CD8-positive, alpha-beta T cell (primary cell): ENCODE measurements at regions of chr7 and their contacts with region 1.

Region 1: GRCh38 chr7:134458806-134459698 is at the start of gene AKR1B1:
- DNase-seq: peak; percentile 75 to 93 (median 87)
- ATAC-seq: peak; percentile 88
- H3K4me3 ChIP-seq: peak within 1 kb of the TSS; percentile 75 to 85
- H3K4me3 Mint-ChIP-seq: peak within 1 kb of the TSS; percentile 83
- H3K27ac ChIP-seq: peak within 1 kb of the TSS; percentile 63 to 74
- H3K27ac Mint-ChIP-seq: peak within 1 kb of the TSS; percentile 76
- H3K4me1 ChIP-seq: peaks cover 36% of the 10 kb centered on the region
- H3K4me1 Mint-ChIP-seq: peaks cover 47% of the 10 kb centered on the region
- H3K27me3 ChIP-seq: no peaks in the 10 kb centered on the region
- H3K27me3 Mint-ChIP-seq: no peaks in the 10 kb centered on the region
- CTCF ChIP-seq: peak; percentile 72
- total RNA-seq, gene AKR1B1: 63.9 to 67.6 TPM

Region 2: GRCh38 chr7:134126966-134127848 is 331.8 kb before region 1 on chr7 and contains the start of gene LRGUK:
- CTCF ChIA-PET with region 1: no interaction called
- POLR2A ChIA-PET with region 1: no interaction called
- intact Hi-C with region 1: loop called (anchors 2 kb)
- DNase-seq: peak; percentile 59 to 88 (median 79)
- ATAC-seq: peak; percentile 100
- H3K4me3 ChIP-seq: peak within 1 kb of the TSS; percentile 61 to 76
- H3K4me3 Mint-ChIP-seq: peak within 1 kb of the TSS; percentile 85
- H3K27ac ChIP-seq: no peak within 1 kb of the TSS
- H3K27ac Mint-ChIP-seq: no peak within 1 kb of the TSS
- H3K4me1 ChIP-seq: peaks cover 10% of the 10 kb centered on the region
- H3K4me1 Mint-ChIP-seq: peaks cover 15% of the 10 kb centered on the region
- H3K27me3 ChIP-seq: peaks cover 0 to 4% of the 10 kb centered on the region in 2 experiments
- H3K27me3 Mint-ChIP-seq: peaks cover 18% of the 10 kb centered on the region
- CTCF ChIP-seq: no peak
- total RNA-seq, gene LRGUK: 0.42 to 0.71 TPM

Region 3: GRCh38 chr7:135147899-135148721 is 689.1 kb after region 1 on chr7 and contains the start of gene TMEM140:
- CTCF ChIA-PET with region 1: no interaction called
- POLR2A ChIA-PET with region 1: no interaction called
- intact Hi-C with region 1: loop called in 1 of 2 experiments (anchors 10 kb)
- DNase-seq: peak; percentile 36 to 91 (median 63)
- ATAC-seq: peak; percentile 78
- H3K4me3 ChIP-seq: peak within 1 kb of the TSS; percentile 60 to 70
- H3K4me3 Mint-ChIP-seq: peak within 1 kb of the TSS; percentile 87
- H3K27ac ChIP-seq: peak within 1 kb of the TSS; percentile 92 to 97
- H3K27ac Mint-ChIP-seq: peak within 1 kb of the TSS; percentile 97
- H3K4me1 ChIP-seq: peaks cover 47% of the 10 kb centered on the region
- H3K4me1 Mint-ChIP-seq: peaks cover 80% of the 10 kb centered on the region
- H3K27me3 ChIP-seq: no peaks in the 10 kb centered on the region
- H3K27me3 Mint-ChIP-seq: no peaks in the 10 kb centered on the region
- CTCF ChIP-seq: no peak
- total RNA-seq, gene TMEM140: 18.8 to 21.8 TPM

Region 4: DNA sequence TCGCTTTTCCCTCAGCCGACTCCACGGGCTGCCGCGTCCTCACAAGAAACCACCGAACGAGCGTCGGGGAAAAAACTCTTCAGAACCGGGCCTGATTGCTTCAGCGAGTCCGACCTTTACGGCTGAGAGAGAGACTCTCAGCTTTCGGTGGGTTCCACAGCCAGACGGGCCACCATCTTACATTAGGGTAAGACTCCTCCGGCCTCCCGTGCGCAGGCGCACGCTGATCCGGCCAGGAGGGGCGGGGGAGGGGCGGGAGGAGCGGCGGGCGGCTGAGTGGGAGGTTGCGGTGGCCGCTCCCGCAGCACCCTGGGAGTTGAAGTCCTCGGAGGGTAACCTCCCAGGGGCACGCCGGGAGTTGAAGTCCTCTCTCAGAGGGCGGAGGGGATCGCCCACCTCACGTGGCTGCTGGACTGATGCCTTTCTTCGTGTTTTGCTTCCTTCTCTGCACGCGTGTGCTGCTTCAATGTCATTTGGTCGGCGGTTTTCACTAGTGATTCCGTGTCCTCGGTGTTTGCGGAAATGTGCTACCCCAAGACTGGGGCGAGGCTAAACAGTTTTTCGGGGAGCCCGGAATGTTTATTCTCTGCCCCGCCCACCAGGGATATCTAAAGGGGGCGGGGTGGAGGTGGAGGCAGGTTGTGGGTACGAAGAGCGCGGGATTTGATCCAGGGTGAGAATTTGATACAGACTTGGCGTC is 1051.0 kb after region 1 on chr7 and contains the start of gene CNOT4:
- CTCF ChIA-PET with region 1: no interaction called
- POLR2A ChIA-PET with region 1: no interaction called
- intact Hi-C with region 1: loop called in 1 of 2 experiments (anchors 2 kb)
- DNase-seq: peak; percentile 94 to 98 (median 97)
- ATAC-seq: peak; percentile 94
- H3K4me3 ChIP-seq: peak within 1 kb of the TSS; percentile 80 to 84
- H3K4me3 Mint-ChIP-seq: no peak within 1 kb of the TSS
- H3K27ac ChIP-seq: peak within 1 kb of the TSS; percentile 78 to 95
- H3K27ac Mint-ChIP-seq: no peak within 1 kb of the TSS
- H3K4me1 ChIP-seq: peaks cover 26% of the 10 kb centered on the region
- H3K4me1 Mint-ChIP-seq: peaks cover 14% of the 10 kb centered on the region
- H3K27me3 ChIP-seq: no peaks in the 10 kb centered on the region
- H3K27me3 Mint-ChIP-seq: no peaks in the 10 kb centered on the region
- CTCF ChIP-seq: no peak
- total RNA-seq, gene CNOT4: 24.8 to 25.9 TPM

Region 5: DNA sequence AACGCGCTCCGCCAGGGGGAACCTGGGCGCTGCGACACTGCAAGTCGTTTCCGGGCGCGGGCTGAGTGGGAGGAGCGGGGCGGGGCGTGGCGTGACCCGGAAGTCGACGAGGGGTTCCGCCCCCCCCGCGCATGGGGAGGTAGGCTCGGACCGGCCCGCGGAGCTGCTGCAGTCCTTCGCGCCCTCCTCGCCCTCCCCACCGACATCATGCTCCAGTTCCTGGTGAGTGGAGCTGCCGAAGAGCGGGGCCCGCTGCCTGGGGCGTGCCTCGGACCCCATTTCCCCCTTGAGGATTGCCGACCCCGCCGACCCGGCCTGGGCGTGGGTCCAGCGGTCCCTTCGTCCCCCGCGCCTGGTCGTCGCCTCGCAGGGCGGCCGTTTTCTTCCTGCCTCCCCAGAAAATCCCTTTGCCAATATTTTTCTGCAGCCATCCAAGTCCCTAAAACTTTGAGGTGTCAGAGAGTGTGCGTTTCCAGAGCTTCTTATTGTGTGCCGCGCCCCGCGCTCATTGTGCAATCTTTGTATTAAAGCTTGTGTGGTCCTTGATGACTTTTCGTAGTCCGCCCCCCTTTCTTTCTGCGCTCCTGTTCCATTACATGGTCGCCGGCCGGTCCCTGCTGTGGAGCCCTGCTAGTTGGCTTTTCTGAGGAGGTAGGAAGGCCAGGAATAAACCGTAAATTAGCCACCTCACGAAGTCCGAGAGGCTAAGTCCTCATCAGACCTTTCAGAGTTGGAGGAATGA is 1203.5 kb after region 1 on chr7 and contains the start of gene STMP1:
- CTCF ChIA-PET with region 1: no interaction called
- POLR2A ChIA-PET with region 1: no interaction called
- intact Hi-C with region 1: loop called in 1 of 2 experiments (anchors 5 kb)
- DNase-seq: peak; percentile 91 to 99 (median 96)
- ATAC-seq: peak; percentile 99
- H3K4me3 ChIP-seq: peak within 1 kb of the TSS; percentile 72 to 76
- H3K4me3 Mint-ChIP-seq: peak within 1 kb of the TSS; percentile 90
- H3K27ac ChIP-seq: peak within 1 kb of the TSS; percentile 53 to 65
- H3K27ac Mint-ChIP-seq: peak within 1 kb of the TSS; percentile 88
- H3K4me1 ChIP-seq: peaks cover 20% of the 10 kb centered on the region
- H3K4me1 Mint-ChIP-seq: peaks cover 41% of the 10 kb centered on the region
- H3K27me3 ChIP-seq: no peaks in the 10 kb centered on the region
- H3K27me3 Mint-ChIP-seq: no peaks in the 10 kb centered on the region
- CTCF ChIP-seq: peak; percentile 64
- total RNA-seq, gene STMP1: 9.4 to 11.5 TPM